A673 (cell line): ENCODE measurements at regions of chr2 and their contacts with region 1.

Region 1: GRCh38 chr2:208854717-208855116 is 448.1 kb downstream of the PTH2R start:
- DNase-seq: no peak
- H3K4me3 ChIP-seq: no peak overlapping the region
- H3K27ac ChIP-seq: no peak overlapping the region
- H3K4me1 ChIP-seq: no peaks in the 10 kb centered on the region
- H3K27me3 ChIP-seq: no peaks in the 10 kb centered on the region
- CTCF ChIP-seq: no peak

Region 2: DNA sequence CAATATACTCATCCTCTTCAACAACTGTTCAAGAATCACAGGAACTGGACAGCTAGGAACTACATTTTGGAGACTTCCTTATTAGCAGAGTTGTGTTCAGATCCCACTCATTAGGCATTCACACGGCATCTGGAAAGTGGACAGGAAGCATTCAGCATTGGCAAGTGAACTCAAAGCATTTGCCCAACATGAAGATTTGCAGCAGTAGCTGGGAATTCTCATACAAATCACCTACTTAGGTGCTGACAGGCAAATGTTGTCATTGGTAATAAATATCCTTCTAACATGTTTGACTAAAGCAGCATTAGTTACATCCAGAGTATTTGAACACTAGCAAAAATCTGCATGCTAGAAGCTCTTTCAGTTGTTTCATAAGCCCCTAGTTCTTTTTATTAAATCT is 97.4 kb before region 1 on chr2:
- CTCF ChIA-PET with region 1: no interaction called
- POLR2A ChIA-PET with region 1: no interaction called
- intact Hi-C with region 1: no loop called
- DNase-seq: no peak
- H3K4me3 ChIP-seq: no peak overlapping the region
- H3K27ac ChIP-seq: no peak overlapping the region
- H3K4me1 ChIP-seq: no peaks in the 10 kb centered on the region
- H3K27me3 ChIP-seq: no peaks in the 10 kb centered on the region
- CTCF ChIP-seq: no peak

Region 3: GRCh38 chr2:208798710-208799109 is 56.0 kb before region 1 on chr2:
- CTCF ChIA-PET with region 1: no interaction called
- POLR2A ChIA-PET with region 1: no interaction called
- intact Hi-C with region 1: loop called (anchors 5 kb)
- DNase-seq: no peak
- H3K4me3 ChIP-seq: no peak overlapping the region
- H3K27ac ChIP-seq: no peak overlapping the region
- H3K4me1 ChIP-seq: no peaks in the 10 kb centered on the region
- H3K27me3 ChIP-seq: no peaks in the 10 kb centered on the region
- CTCF ChIP-seq: no peak